ENCODE measurements at regions of chr6 and their contacts with region 1.

Region 1: GRCh38 chr6:85354761-85355618 is 94.9 kb upstream of the NT5E start:
- DNase-seq: peak; percentile 51
- H3K4me3 ChIP-seq: no peak overlapping the region
- H3K27ac ChIP-seq: no peak overlapping the region
- H3K27me3 ChIP-seq: no peaks in the 10 kb centered on the region
- CTCF ChIP-seq: peak; percentile 91

Region 2: GRCh38 chr6:85250586-85251220 is 104.3 kb before region 1 on chr6:
- CTCF ChIA-PET with region 1: no interaction called
- POLR2A ChIA-PET with region 1: no interaction called
- DNase-seq: no peak
- H3K4me3 ChIP-seq: no peak overlapping the region
- H3K27ac ChIP-seq: no peak overlapping the region
- H3K27me3 ChIP-seq: no peaks in the 10 kb centered on the region
- CTCF ChIP-seq: no peak

Region 3: GRCh38 chr6:85404502-85405174 is 49.6 kb after region 1 on chr6:
- CTCF ChIA-PET with region 1: interaction called, 10 read pairs
- POLR2A ChIA-PET with region 1: interaction called, 4 read pairs
- DNase-seq: peak; percentile 79
- H3K4me3 ChIP-seq: no peak overlapping the region
- H3K27ac ChIP-seq: peak overlapping the region; percentile 95
- H3K27me3 ChIP-seq: no peaks in the 10 kb centered on the region
- CTCF ChIP-seq: no peak

Region 4: GRCh38 chr6:85455471-85456026 is 100.6 kb after region 1 on chr6:
- CTCF ChIA-PET with region 1: interaction called, 43 read pairs
- POLR2A ChIA-PET with region 1: no interaction called
- DNase-seq: no peak
- H3K4me3 ChIP-seq: no peak overlapping the region
- H3K27ac ChIP-seq: no peak overlapping the region
- H3K27me3 ChIP-seq: no peaks in the 10 kb centered on the region
- CTCF ChIP-seq: no peak

Region 5: DNA sequence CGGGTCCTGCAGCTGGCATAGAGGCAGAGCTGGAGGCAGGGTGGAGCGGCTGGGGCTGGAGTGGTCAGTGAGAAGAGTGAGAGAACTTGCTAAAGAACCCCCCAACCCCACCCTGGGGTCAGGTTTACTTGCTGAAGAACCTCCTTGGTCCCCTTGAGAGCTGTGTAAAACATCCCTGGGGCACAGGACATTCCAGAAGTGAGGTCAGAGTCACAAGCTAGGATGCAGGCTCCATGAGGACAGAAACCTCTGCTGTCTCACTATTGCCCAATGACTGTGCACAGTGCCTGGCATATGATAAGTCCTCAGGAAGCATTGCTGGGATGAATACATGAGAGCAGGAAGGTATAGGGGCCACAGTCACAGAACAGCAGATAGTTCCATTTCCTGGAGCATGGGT is 113.3 kb after region 1 on chr6:
- CTCF ChIA-PET with region 1: interaction called, 42 read pairs
- POLR2A ChIA-PET with region 1: no interaction called
- DNase-seq: no peak
- H3K4me3 ChIP-seq: no peak overlapping the region
- H3K27ac ChIP-seq: no peak overlapping the region
- H3K27me3 ChIP-seq: no peaks in the 10 kb centered on the region
- CTCF ChIP-seq: no peak

Region 6: DNA sequence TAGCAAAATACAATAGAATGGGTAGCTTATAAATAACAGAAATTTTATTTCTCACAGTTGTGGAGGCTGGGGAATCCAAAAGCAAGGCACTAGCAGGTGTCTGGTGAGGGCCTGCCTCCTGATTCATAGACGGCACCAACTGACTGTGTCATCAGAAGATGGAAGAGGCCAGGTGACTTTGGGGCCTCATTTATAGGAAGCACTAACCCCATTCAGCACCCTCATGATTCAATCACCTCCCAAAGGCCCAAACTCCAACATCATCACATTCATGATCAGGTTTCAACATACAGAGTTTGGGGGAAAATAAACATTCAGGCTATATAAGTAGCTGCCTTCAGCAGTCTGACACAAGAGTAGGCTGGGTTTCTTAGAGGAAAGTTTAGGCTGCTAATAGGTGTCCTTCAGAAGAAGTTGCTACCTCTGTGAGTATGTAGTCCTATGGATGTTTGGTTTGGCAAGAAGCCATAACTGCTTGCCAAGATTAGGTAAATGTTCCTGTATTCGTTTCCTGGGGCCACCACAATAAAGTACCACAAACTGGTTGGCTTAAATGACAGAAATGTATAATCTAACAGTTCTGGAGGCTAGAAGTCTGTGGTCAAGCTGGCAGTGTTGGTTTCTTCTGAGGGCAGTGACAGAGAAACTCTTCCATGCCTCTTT is 143.7 kb after region 1 on chr6:
- CTCF ChIA-PET with region 1: interaction called, 34 read pairs
- POLR2A ChIA-PET with region 1: no interaction called
- DNase-seq: no peak
- H3K4me3 ChIP-seq: no peak overlapping the region
- H3K27ac ChIP-seq: no peak overlapping the region
- H3K27me3 ChIP-seq: no peaks in the 10 kb centered on the region
- CTCF ChIP-seq: no peak

Region 7: DNA sequence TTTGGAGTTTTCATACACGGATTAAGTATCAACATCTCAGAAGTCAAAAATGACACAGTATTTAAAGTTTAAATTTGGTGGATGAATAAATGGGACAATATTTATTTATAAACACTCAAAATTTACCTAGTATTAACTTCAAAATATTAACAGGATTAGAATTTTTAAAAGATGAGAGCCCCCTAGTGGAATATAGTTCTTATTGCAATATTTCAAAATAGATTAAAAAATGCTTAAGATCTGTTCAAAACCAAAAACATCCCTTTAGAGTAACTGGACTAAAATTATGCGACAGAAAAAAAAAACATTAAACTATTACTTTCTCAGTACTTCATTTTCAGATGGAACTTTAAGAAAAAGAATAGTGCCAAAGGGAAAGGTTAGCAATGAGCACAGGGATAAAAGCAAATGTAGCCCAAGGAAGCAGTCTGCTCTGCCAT is 182.1 kb after region 1 on chr6:
- CTCF ChIA-PET with region 1: interaction called, 81 read pairs
- POLR2A ChIA-PET with region 1: no interaction called
- DNase-seq: no peak
- H3K4me3 ChIP-seq: no peak overlapping the region
- H3K27ac ChIP-seq: no peak overlapping the region
- H3K27me3 ChIP-seq: no peaks in the 10 kb centered on the region
- CTCF ChIP-seq: peak; percentile 42

Region 8: GRCh38 chr6:87139236-87139635 is 1784.2 kb after region 1 on chr6:
- CTCF ChIA-PET with region 1: no interaction called
- POLR2A ChIA-PET with region 1: no interaction called
- DNase-seq: no peak
- H3K4me3 ChIP-seq: no peak overlapping the region
- H3K27ac ChIP-seq: no peak overlapping the region
- H3K27me3 ChIP-seq: no peaks in the 10 kb centered on the region
- CTCF ChIP-seq: peak; percentile 70